ENCODE measurements at regions of chr6 and their contacts with region 1.

Region 1: GRCh38 chr6:144778773-144779492 is 493.8 kb downstream of the UTRN start:
- DNase-seq: no peak
- H3K4me3 ChIP-seq: no peak overlapping the region
- H3K27ac ChIP-seq: no peak overlapping the region
- H3K4me1 ChIP-seq: no peaks in the 10 kb centered on the region
- H3K27me3 ChIP-seq: no peaks in the 10 kb centered on the region
- CTCF ChIP-seq: no peak
- POLR2A ChIP-seq: no peak

Region 2: DNA sequence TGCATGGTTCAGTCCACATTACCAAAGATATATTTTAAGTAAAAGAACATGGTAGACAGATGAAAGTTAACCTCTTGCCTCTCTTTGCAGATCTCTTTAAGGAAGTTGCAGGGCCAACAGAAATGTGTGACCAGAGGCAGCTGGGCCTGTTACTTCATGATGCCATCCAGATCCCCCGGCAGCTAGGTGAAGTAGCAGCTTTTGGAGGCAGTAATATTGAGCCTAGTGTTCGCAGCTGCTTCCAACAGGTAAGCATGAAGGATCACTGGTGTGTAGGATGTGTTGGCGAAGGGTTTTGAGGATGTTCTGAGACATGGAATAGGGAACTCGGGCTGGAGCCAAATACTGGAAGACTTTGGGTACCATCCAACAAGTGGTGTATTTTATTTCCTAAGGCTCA is 14.8 kb after region 1 on chr6:
- CTCF ChIA-PET with region 1: interaction called, 4 read pairs
- POLR2A ChIA-PET with region 1: no interaction called
- dilution Hi-C with region 1: no loop called
- intact Hi-C with region 1: loop called (anchors 2 kb)
- DNase-seq: no peak
- H3K4me3 ChIP-seq: no peak overlapping the region
- H3K27ac ChIP-seq: no peak overlapping the region
- H3K4me1 ChIP-seq: peaks cover 11% of the 10 kb centered on the region
- H3K27me3 ChIP-seq: no peaks in the 10 kb centered on the region
- CTCF ChIP-seq: no peak
- POLR2A ChIP-seq: no peak

Measured in endothelial cell of umbilical vein (primary cell).